ENCODE measurements at regions of chr16 and their contacts with region 1.

Region 1: GRCh38 chr16:56988948-56989945 is at the start of gene NLRC5:
- DNase-seq: peak; percentile 95
- ATAC-seq: peak; percentile 71
- H3K4me3 Mint-ChIP-seq: peak within 1 kb of the TSS; percentile 97
- H3K27ac Mint-ChIP-seq: peak within 1 kb of the TSS; percentile 99
- H3K4me1 Mint-ChIP-seq: peaks cover 58% of the 10 kb centered on the region
- H3K27me3 Mint-ChIP-seq: no peaks in the 10 kb centered on the region
- CTCF ChIP-seq: no peak
- total RNA-seq, gene NLRC5: 135 to 153 TPM

Region 2: GRCh38 chr16:56931892-56932720 is 57.1 kb before region 1 on chr16 and contains the start of gene HERPUD1:
- CTCF ChIA-PET with region 1: no interaction called
- POLR2A ChIA-PET with region 1: interaction called, 15 read pairs
- intact Hi-C with region 1: no loop called
- DNase-seq: peak; percentile 99
- ATAC-seq: peak; percentile 91
- H3K4me3 Mint-ChIP-seq: peak within 1 kb of the TSS; percentile 98
- H3K27ac Mint-ChIP-seq: peak within 1 kb of the TSS; percentile 98
- H3K4me1 Mint-ChIP-seq: peaks cover 35% of the 10 kb centered on the region
- H3K27me3 Mint-ChIP-seq: no peaks in the 10 kb centered on the region
- CTCF ChIP-seq: no peak
- total RNA-seq, gene HERPUD1: 142 to 150 TPM

Region 3: GRCh38 chr16:56970934-56971767 is 18.1 kb before region 1 on chr16:
- CTCF ChIA-PET with region 1: interaction called, 87 read pairs
- POLR2A ChIA-PET with region 1: interaction called, 34 read pairs
- intact Hi-C with region 1: no loop called
- DNase-seq: no peak
- ATAC-seq: no peak
- H3K4me3 Mint-ChIP-seq: no peak overlapping the region
- H3K27ac Mint-ChIP-seq: no peak overlapping the region
- H3K4me1 Mint-ChIP-seq: peaks cover 37% of the 10 kb centered on the region
- H3K27me3 Mint-ChIP-seq: no peaks in the 10 kb centered on the region
- CTCF ChIP-seq: no peak

Region 4: GRCh38 chr16:57000271-57001025 is 11.2 kb after region 1 on chr16:
- CTCF ChIA-PET with region 1: interaction called, 3 read pairs
- POLR2A ChIA-PET with region 1: interaction called, 367 read pairs
- intact Hi-C with region 1: no loop called
- DNase-seq: peak; percentile 88
- ATAC-seq: peak; percentile 84
- H3K4me3 Mint-ChIP-seq: peak overlapping the region; percentile 51
- H3K27ac Mint-ChIP-seq: peak overlapping the region; percentile 99
- H3K4me1 Mint-ChIP-seq: peaks cover 94% of the 10 kb centered on the region
- H3K27me3 Mint-ChIP-seq: no peaks in the 10 kb centered on the region
- CTCF ChIP-seq: no peak

Region 5: DNA sequence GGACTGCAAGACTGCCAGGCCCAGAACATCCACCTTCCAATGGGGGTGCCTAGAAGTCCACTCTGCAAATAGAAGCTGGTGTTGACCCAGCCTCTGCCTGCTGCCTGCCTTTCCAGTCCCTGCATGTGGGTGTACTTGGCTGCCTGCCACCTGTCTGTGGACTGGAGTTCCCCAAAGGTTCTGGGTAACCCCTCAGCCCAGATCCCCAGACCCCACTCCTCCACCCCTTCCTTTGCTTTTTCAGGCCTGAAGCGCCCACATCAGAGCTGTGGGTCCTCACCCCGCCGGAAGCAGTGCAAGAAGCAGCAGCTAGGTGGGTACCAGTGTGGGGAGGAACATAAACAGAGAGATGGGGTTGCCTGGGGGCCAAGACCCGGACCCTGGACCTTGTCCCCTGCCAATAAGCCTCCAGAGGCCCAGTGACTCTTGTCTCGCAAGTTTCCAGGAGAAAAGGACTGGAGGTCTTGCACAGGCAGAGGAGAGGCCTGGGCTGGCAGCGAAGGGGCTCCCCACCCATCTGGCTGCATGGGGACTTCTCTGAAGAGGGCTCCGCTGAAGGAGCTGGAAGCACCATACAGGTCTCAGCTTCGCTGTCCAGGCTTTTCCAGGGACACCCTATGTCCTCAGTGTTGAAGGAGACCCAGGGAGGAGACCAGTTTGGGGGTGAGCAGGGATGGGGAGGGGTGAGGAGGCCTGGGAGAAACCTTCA is 34.4 kb after region 1 on chr16:
- CTCF ChIA-PET with region 1: interaction called, 5 read pairs
- POLR2A ChIA-PET with region 1: interaction called, 208 read pairs
- intact Hi-C with region 1: no loop called
- DNase-seq: peak; percentile 93
- ATAC-seq: peak; percentile 89
- H3K4me3 Mint-ChIP-seq: peak overlapping the region; percentile 41
- H3K27ac Mint-ChIP-seq: peak overlapping the region; percentile 80
- H3K4me1 Mint-ChIP-seq: peaks cover 89% of the 10 kb centered on the region
- H3K27me3 Mint-ChIP-seq: no peaks in the 10 kb centered on the region
- CTCF ChIP-seq: no peak

Region 6: DNA sequence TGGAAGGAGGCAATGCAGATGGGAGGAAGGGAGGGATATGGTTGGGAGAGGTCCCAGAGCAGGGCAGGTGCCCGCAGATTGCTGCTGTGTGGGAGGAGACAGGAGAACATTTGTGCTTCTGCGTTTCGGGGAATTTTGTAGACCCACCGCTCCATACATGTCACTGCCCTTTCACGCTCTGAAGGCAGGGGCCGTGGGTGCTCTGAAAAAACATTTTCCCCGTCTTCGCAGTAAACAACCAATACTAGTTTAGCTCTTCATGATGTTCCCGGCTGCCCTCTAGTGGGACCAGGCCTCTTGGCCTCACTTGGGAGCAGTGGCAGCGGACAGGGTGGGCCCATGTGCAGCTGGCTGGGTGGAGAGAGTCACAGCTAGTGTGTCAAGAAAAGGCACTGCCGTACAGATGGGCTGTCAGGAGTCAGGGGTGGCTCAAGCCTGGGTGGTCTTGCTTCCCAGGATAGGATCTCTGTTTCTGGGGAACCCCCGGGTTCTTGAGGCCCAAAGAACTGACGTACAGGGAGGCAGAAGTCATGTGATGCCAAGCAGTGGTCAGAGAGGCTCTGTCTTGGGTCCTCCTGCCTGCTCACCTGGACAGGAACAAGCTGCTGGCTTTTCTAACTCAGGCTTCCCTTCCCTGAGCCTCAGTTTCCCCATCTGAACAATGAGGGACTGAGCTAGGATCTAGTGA is 56.6 kb after region 1 on chr16:
- CTCF ChIA-PET with region 1: interaction called, 8 read pairs
- POLR2A ChIA-PET with region 1: interaction called, 208 read pairs
- intact Hi-C with region 1: loop called (anchors 1 kb)
- DNase-seq: peak; percentile 77
- ATAC-seq: no peak
- H3K4me3 Mint-ChIP-seq: no peak overlapping the region
- H3K27ac Mint-ChIP-seq: peak overlapping the region; percentile 99
- H3K4me1 Mint-ChIP-seq: peaks cover 77% of the 10 kb centered on the region
- H3K27me3 Mint-ChIP-seq: no peaks in the 10 kb centered on the region
- CTCF ChIP-seq: no peak

Measured in activated CD8-positive, alpha-beta T cell treated with anti-CD3 and anti-CD28 coated beads for 36 hours (primary cell).